ENCODE measurements at regions of chrX and their contacts with region 1.

Region 1: DNA sequence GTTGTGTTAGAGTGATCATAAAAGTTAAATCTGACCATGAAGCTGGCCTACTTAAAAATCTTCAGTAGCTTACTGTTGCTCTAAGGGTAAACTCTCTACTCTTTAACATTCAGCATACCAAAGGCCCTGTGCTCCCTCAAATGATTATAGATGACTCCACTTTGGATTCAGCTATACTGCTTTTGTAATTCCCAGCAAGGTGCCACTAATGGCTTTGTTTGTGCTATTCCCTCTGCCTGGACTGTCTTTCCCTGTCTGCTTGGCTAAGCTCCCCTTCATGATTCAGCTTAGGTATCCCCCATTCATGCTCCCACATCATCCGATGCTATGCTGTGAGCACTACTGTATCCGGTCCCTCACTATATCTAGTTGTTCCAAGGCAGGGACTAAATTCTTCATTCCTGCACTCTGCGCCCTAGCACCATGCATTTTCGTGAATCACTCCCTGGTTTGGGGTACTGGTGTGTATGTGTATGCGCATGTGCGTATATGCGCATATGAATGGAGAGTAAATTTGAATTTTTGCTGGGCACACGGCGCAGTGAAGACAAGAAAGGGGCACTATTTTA is 453 bp upstream of the PBDC1 start:
- DNase-seq: no peak
- H3K4me3 Mint-ChIP-seq: peak overlapping the region; percentile 92
- H3K27ac Mint-ChIP-seq: peak overlapping the region; percentile 93
- H3K4me1 Mint-ChIP-seq: peaks cover 53% of the 10 kb centered on the region
- H3K27me3 Mint-ChIP-seq: no peaks in the 10 kb centered on the region

Region 2: DNA sequence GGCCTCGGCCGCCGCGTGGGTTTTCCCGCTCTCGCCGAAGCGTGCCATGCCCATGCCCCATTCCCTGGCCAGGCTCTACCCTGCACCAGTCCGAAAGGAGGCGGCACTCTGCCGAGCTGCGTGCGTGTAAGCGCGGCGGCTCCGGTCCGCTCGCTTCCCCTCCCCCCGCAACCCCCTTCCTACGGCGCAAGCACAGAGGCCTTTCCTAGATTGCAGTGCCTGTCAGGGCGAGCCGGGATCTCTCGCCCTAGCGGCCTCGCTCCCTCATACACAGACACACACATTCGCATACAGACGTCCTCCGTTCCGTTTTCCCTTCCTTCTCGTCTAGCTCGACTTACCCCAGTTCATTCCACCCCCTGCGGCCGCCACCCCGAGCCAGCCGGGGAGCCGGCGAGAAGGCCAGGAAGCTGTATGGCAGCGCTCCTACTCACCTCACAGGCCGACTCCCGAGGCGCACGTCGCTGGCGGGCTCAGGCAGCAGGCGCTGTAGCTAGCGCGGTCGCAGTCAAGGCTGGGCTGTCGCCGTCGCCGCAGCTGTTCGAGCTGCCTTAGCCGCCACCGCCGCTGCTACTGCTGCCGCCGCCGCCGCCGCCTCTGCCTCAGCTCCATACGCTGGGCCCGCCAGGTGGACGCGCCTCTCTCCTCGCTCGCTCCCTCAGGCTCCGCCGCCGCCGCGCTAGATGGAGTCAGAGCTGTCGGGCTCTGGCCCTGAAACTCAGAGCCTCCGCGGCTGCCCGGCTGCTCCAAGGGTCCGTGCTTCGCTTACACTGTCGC is 1247.8 kb before region 1 on chrX:
- CTCF ChIA-PET with region 1: no interaction called
- intact Hi-C with region 1: loop called (anchors 10 kb)
- DNase-seq: peak; percentile 47
- H3K4me3 Mint-ChIP-seq: peak overlapping the region; percentile 95
- H3K27ac Mint-ChIP-seq: peak overlapping the region; percentile 87
- H3K4me1 Mint-ChIP-seq: peaks cover 6% of the 10 kb centered on the region
- H3K27me3 Mint-ChIP-seq: peaks cover 5% of the 10 kb centered on the region

Region 3: DNA sequence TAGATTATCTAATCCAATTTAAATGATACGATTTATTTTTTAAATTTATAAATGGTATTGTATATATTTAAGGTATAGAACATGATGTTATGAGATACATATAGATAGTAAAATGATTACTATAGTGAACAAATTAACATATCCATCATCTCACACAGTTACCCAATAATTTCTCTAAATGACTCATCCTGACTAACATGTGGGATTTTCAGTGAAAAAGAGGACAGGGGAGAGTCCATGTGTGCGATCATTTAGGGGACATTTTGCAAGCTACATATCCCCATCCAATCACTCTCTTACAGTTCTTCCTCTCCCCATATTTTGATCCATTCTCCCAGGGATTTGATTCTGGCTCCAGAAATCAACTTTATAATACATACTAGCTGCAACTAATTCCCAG is 1104.5 kb before region 1 on chrX:
- CTCF ChIA-PET with region 1: no interaction called
- intact Hi-C with region 1: no loop called
- DNase-seq: no peak
- H3K4me3 Mint-ChIP-seq: no peak overlapping the region
- H3K27ac Mint-ChIP-seq: no peak overlapping the region
- H3K4me1 Mint-ChIP-seq: peaks cover 4% of the 10 kb centered on the region
- H3K27me3 Mint-ChIP-seq: no peaks in the 10 kb centered on the region

Region 4: GRCh38 chrX:76253432-76253831 is 81.0 kb after region 1 on chrX:
- CTCF ChIA-PET with region 1: interaction called, 5 read pairs
- intact Hi-C with region 1: loop called (anchors 5 kb)
- DNase-seq: peak; percentile 56
- H3K4me3 Mint-ChIP-seq: no peak overlapping the region
- H3K27ac Mint-ChIP-seq: no peak overlapping the region
- H3K4me1 Mint-ChIP-seq: no peaks in the 10 kb centered on the region
- H3K27me3 Mint-ChIP-seq: no peaks in the 10 kb centered on the region

Region 5: GRCh38 chrX:76427560-76428242 is 255.3 kb after region 1 on chrX and contains the start of gene MAGEE1:
- CTCF ChIA-PET with region 1: no interaction called
- intact Hi-C with region 1: loop called (anchors 5 kb)
- DNase-seq: peak; percentile 82
- H3K4me3 Mint-ChIP-seq: peak within 1 kb of the TSS; percentile 81
- H3K27ac Mint-ChIP-seq: peak within 1 kb of the TSS; percentile 50
- H3K4me1 Mint-ChIP-seq: peaks cover 25% of the 10 kb centered on the region
- H3K27me3 Mint-ChIP-seq: no peaks in the 10 kb centered on the region
- total RNA-seq, gene MAGEE1: 3.0 to 3.1 TPM

Region 6: GRCh38 chrX:77003956-77004355 is 831.5 kb after region 1 on chrX:
- CTCF ChIA-PET with region 1: no interaction called
- intact Hi-C with region 1: loop called (anchors 5 kb)
- DNase-seq: peak; percentile 72
- H3K4me3 Mint-ChIP-seq: no peak overlapping the region
- H3K27ac Mint-ChIP-seq: peak overlapping the region; percentile 75
- H3K4me1 Mint-ChIP-seq: peaks cover 16% of the 10 kb centered on the region
- H3K27me3 Mint-ChIP-seq: peaks cover 3% of the 10 kb centered on the region

Region 7: DNA sequence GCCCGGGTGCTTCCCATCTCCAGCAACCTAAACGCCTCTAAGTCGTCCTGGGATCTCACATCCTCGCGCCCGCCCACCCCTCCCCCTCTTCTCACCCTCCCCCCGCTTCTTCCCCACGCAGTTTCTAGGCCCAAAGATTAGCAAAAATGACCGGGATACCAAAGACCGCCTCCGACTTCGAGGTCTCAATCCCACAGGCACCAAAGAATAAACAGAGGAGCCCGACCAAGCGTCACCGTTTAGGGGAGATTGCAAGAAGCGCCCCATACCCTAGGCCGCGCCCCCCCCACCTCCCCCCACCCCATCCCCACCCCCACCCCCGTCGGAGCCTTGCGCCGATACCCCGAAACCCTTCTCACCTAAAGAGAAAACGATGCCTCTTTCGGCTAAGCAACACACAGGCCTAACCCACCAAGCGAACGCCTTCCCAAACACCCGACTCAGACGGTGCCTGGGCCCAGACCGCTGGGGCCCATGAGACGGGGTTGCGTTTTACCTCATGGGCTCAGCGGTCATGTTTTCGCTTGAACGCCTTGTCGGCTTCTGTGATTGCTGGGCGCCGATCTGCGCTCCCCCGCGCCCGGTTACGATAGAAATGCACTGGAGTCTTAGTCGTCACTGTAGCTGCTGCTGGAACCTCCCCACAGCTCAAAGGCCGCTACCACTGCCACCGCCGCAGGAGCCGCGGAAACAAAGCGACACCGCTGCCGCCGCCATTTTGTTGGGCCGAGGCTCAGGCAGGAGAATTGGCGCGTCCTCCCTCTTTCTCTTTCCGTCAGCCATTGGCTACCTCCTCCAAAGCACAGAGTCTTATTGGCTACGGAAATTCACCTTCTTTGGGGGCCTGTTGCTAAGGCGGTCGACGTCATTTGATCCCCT is 1613.3 kb after region 1 on chrX and contains the start of gene ATRX:
- CTCF ChIA-PET with region 1: no interaction called
- intact Hi-C with region 1: loop called (anchors 10 kb)
- DNase-seq: peak; percentile 80
- H3K4me3 Mint-ChIP-seq: peak within 1 kb of the TSS; percentile 99
- H3K27ac Mint-ChIP-seq: peak within 1 kb of the TSS; percentile 100
- H3K4me1 Mint-ChIP-seq: peaks cover 17% of the 10 kb centered on the region
- H3K27me3 Mint-ChIP-seq: no peaks in the 10 kb centered on the region
- total RNA-seq, gene ATRX: 49.2 to 49.9 TPM